ENCODE measurements at regions of chr6 and their contacts with region 1.

Region 1: GRCh38 chr6:161429921-161430490 is 156.1 kb upstream of the AGPAT4 start:
- DNase-seq: no peak
- H3K4me3 Mint-ChIP-seq: no peak overlapping the region
- H3K27ac Mint-ChIP-seq: no peak overlapping the region
- H3K4me1 Mint-ChIP-seq: no peaks in the 10 kb centered on the region
- H3K27me3 Mint-ChIP-seq: no peaks in the 10 kb centered on the region

Region 2: GRCh38 chr6:163387317-163387716 is 1957.3 kb after region 1 on chr6:
- intact Hi-C with region 1: loop called (anchors 10 kb)
- DNase-seq: no peak
- H3K4me3 Mint-ChIP-seq: no peak overlapping the region
- H3K27ac Mint-ChIP-seq: no peak overlapping the region
- H3K4me1 Mint-ChIP-seq: no peaks in the 10 kb centered on the region
- H3K27me3 Mint-ChIP-seq: peaks cover 9% of the 10 kb centered on the region

Measured in activated T-helper 2 cell treated with anti-CD3 and anti-CD28 coated beads, Interferon-gamma antibody, Interleukin-2, Interleukin-4, amounts not matched to agents 10 μg/mL and 5 μg/mL and 100 μg/mL, durations not matched to agents 14 hours and 24 hours and 36 hours (primary cell).